Adrenal gland (tissue), 19 donors: ENCODE measurements at regions of chr1 and their contacts with region 1.

Region 1: GRCh38 chr1:215526553-215527151 is 40.5 kb upstream of the KCTD3 start:
- DNase-seq: no peak
- H3K4me3 ChIP-seq: no peak overlapping the region
- H3K27ac ChIP-seq: no peak overlapping the region
- H3K4me1 ChIP-seq: peaks cover 0 to 7% of the 10 kb centered on the region in 2 donors
- H3K27me3 ChIP-seq: no peaks in the 10 kb centered on the region
- CTCF ChIP-seq: peak; percentile 66 to 84 (median 80)
- POLR2A ChIP-seq: no peak

Region 2: GRCh38 chr1:214637722-214638458 is 888.8 kb before region 1 on chr1:
- intact Hi-C with region 1: loop called in 1 of 2 experiments (anchors 10 kb)
- DNase-seq: peak in 3 of 7 donors; percentile 20 to 41 (median 34)
- H3K4me3 ChIP-seq: no peak overlapping the region
- H3K27ac ChIP-seq: no peak overlapping the region
- H3K4me1 ChIP-seq: no peaks in the 10 kb centered on the region
- H3K27me3 ChIP-seq: no peaks in the 10 kb centered on the region
- CTCF ChIP-seq: peak; percentile 35 to 72 (median 56)
- POLR2A ChIP-seq: no peak

Region 3: GRCh38 chr1:214658786-214659185 is 867.9 kb before region 1 on chr1:
- intact Hi-C with region 1: loop called in 1 of 2 experiments (anchors 5 kb)
- DNase-seq: peak; percentile 41 to 68 (median 53)
- H3K4me3 ChIP-seq: peak overlapping the region in 1 of 4 donors; percentile 29
- H3K27ac ChIP-seq: peak overlapping the region in 1 of 5 donors; percentile 1
- H3K4me1 ChIP-seq: peaks cover 0 to 29% of the 10 kb centered on the region in 2 donors
- H3K27me3 ChIP-seq: no peaks in the 10 kb centered on the region
- CTCF ChIP-seq: peak; percentile 29 to 64 (median 51)
- POLR2A ChIP-seq: no peak

Region 4: GRCh38 chr1:214791961-214792360 is 734.7 kb before region 1 on chr1:
- intact Hi-C with region 1: loop called in 1 of 2 experiments (anchors 10 kb)
- DNase-seq: peak in 1 of 7 donors; percentile 23
- H3K4me3 ChIP-seq: no peak overlapping the region
- H3K27ac ChIP-seq: no peak overlapping the region
- H3K4me1 ChIP-seq: peaks cover 9 to 22% of the 10 kb centered on the region in 2 donors
- H3K27me3 ChIP-seq: no peaks in the 10 kb centered on the region
- CTCF ChIP-seq: no peak
- POLR2A ChIP-seq: no peak

Region 5: DNA sequence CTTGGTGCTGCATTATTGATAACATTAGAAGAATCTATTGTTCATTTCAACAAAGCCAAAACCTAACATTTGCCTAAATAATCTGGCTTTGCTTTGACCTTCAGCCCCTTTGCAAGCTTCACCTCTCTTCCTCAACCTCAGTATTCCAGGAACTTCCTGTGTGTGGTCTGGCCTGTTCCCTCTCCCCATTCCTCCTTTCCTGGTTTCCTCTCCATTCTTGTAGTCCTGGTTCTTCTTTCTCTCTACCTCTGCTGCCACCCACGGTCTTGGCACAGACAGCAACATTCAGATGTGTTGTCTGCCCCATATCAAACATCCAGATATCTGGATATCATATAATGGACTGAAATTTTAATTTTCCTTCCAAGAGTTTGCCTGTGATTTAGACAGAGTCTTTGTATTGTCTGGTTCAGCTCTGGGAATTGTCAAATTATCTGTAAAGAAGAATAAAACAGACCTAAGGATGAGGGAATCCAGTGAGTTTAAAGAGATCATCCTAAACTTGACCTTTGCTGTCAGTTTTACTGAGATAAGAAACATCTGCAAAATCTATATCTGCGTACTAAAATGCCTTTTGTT is 107.7 kb before region 1 on chr1:
- intact Hi-C with region 1: no loop called
- DNase-seq: no peak
- H3K4me3 ChIP-seq: no peak overlapping the region
- H3K27ac ChIP-seq: no peak overlapping the region
- H3K4me1 ChIP-seq: peaks cover 19 to 24% of the 10 kb centered on the region in 2 donors
- H3K27me3 ChIP-seq: no peaks in the 10 kb centered on the region
- CTCF ChIP-seq: no peak
- POLR2A ChIP-seq: no peak

Region 6: DNA sequence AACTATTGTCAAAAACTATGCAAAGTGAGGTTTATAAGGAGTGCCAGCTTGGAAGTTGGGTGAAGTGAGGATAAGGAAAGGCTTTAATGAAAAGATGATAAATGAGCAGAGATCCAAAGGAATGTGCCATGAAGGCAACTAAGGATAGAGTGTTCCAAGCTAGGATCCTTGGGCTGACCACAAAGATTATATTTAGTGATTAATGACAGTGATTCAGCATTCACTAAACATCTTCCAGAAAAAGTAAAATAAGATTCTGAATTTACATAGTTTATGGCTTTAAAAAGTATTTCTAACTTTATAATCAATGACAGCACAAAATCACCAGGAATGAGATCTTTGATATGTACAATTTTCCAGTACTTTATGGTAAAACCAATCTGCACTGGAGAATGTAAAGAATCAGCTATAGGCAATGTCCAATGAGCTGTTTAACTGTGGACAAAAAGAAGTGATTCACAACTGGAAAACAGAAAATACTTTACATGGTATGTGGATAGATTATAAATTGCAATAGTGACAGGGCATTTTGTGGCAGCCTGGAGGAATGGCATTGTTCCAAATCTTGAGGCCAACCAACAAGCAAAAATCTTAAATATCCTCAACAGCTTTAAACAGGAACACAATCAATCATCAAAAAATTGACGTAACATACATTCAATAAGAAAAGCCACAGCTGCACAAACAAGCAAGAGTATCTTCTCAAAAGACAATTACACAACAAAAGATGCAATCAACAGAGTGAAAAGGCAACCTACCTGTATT is 50.7 kb before region 1 on chr1:
- intact Hi-C with region 1: no loop called
- DNase-seq: peak in 4 of 7 donors; percentile 12 to 57 (median 25)
- H3K4me3 ChIP-seq: no peak overlapping the region
- H3K27ac ChIP-seq: peak overlapping the region in 4 of 5 donors; percentile 24 to 49 (median 39)
- H3K4me1 ChIP-seq: peaks cover 23 to 24% of the 10 kb centered on the region in 2 donors
- H3K27me3 ChIP-seq: no peaks in the 10 kb centered on the region
- CTCF ChIP-seq: no peak
- POLR2A ChIP-seq: no peak